Activated T-helper 1 cell treated with anti-CD3 and anti-CD28 coated beads, Interleukin-12 subunit alpha, Interleukin-12 subunit beta, Interleukin-2, Interleukin-4 antibody, amounts not matched to agents 30 ng/mL and 10 ng/mL and 1 ng/mL, durations not matched to agents 14 hours and 24 hours and 36 hours (primary cell): ENCODE measurements at regions of chr21 and their contacts with region 1.

Region 1: GRCh38 chr21:31683030-31683429 is 23.5 kb downstream of the SOD1 start:
- DNase-seq: no peak
- H3K4me3 Mint-ChIP-seq: no peak overlapping the region
- H3K27ac Mint-ChIP-seq: no peak overlapping the region
- H3K4me1 Mint-ChIP-seq: no peaks in the 10 kb centered on the region
- H3K27me3 Mint-ChIP-seq: no peaks in the 10 kb centered on the region

Region 2: DNA sequence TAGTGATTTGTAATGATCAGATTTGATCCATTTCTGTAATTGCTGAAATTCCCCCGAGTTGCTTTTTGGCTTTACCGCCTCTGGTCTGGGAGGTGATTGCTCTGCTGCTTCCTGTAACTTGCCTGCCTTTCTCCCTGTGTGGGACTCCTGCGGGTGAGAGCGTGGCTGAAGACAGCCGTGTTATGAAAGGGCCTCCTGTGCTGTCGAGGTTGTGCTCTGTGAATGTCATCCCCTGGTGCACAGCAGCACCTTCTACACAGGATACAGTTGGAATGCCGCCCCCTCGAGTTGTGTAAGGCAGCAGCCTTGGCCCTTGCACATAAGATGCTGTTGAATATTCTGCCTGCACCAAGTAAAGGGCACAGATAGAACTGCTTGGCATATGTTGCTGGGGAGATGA is 17.6 kb before region 1 on chr21:
- intact Hi-C with region 1: loop called (anchors 1 kb)
- DNase-seq: peak; percentile 23
- H3K4me3 Mint-ChIP-seq: peak overlapping the region; percentile 41
- H3K27ac Mint-ChIP-seq: peak overlapping the region; percentile 50
- H3K4me1 Mint-ChIP-seq: peaks cover 86% of the 10 kb centered on the region
- H3K27me3 Mint-ChIP-seq: no peaks in the 10 kb centered on the region